B cell (primary cell): ENCODE measurements at regions of chr15 and their contacts with region 1.

Region 1: DNA sequence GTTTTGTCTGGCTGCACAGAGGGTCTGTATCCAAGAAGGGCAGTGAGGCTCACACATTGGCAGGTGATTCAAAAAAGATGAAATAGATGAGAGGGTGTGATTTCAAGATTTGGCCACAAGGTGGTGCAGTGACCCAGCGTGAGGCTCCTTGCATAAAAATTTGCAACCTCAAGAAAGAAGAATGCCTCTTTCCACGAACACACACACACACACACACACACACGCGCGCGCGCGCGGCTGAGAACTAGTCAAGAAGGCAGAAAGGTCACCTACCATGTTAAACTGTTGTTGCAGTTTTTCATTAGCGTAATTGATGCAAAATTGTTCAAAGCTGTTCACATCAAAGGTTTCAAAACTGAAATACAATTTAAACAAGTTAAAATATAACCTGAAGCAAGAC is 39.2 kb downstream of the MYO5C start:
- DNase-seq: peak; percentile 89
- ATAC-seq: peak; percentile 87
- H3K4me3 ChIP-seq: no peak overlapping the region
- H3K4me3 Mint-ChIP-seq: peak overlapping the region; percentile 50
- H3K27ac ChIP-seq: no peak overlapping the region
- H3K27ac Mint-ChIP-seq: peak overlapping the region; percentile 85
- H3K4me1 ChIP-seq: peaks cover 18 to 33% of the 10 kb centered on the region in 2 donors
- H3K4me1 Mint-ChIP-seq: peaks cover 43% of the 10 kb centered on the region
- H3K27me3 ChIP-seq: no peaks in the 10 kb centered on the region
- H3K27me3 Mint-ChIP-seq: no peaks in the 10 kb centered on the region
- CTCF ChIP-seq: peak; percentile 79

Region 2: GRCh38 chr15:52217186-52217585 is 39.2 kb before region 1 on chr15:
- CTCF ChIA-PET with region 1: interaction called, 512 read pairs
- POLR2A ChIA-PET with region 1: interaction called, 3 read pairs
- intact Hi-C with region 1: no loop called
- DNase-seq: peak; percentile 52
- ATAC-seq: peak; percentile 58
- H3K4me3 ChIP-seq: no peak overlapping the region
- H3K4me3 Mint-ChIP-seq: no peak overlapping the region
- H3K27ac ChIP-seq: no peak overlapping the region
- H3K27ac Mint-ChIP-seq: peak overlapping the region; percentile 47
- H3K4me1 ChIP-seq: peaks cover 19 to 21% of the 10 kb centered on the region in 2 donors
- H3K4me1 Mint-ChIP-seq: peaks cover 32% of the 10 kb centered on the region
- H3K27me3 ChIP-seq: no peaks in the 10 kb centered on the region
- H3K27me3 Mint-ChIP-seq: no peaks in the 10 kb centered on the region
- CTCF ChIP-seq: peak; percentile 45

Region 3: GRCh38 chr15:52331490-52332240 is 75.3 kb after region 1 on chr15:
- CTCF ChIA-PET with region 1: interaction called, 44 read pairs
- POLR2A ChIA-PET with region 1: interaction called, 3 read pairs
- intact Hi-C with region 1: loop called (anchors 1 kb)
- DNase-seq: peak; percentile 67
- ATAC-seq: peak; percentile 90
- H3K4me3 ChIP-seq: no peak overlapping the region
- H3K4me3 Mint-ChIP-seq: no peak overlapping the region
- H3K27ac ChIP-seq: peak overlapping the region in 1 of 2 donors; percentile 20
- H3K27ac Mint-ChIP-seq: peak overlapping the region; percentile 74
- H3K4me1 ChIP-seq: peaks cover 7 to 8% of the 10 kb centered on the region in 2 donors
- H3K4me1 Mint-ChIP-seq: peaks cover 10% of the 10 kb centered on the region
- H3K27me3 ChIP-seq: no peaks in the 10 kb centered on the region
- H3K27me3 Mint-ChIP-seq: no peaks in the 10 kb centered on the region
- CTCF ChIP-seq: peak; percentile 66

Region 4: GRCh38 chr15:52466134-52466701 is 209.9 kb after region 1 on chr15:
- CTCF ChIA-PET with region 1: interaction called, 6 read pairs
- POLR2A ChIA-PET with region 1: no interaction called
- intact Hi-C with region 1: loop called (anchors 2 kb)
- DNase-seq: peak; percentile 94
- ATAC-seq: peak; percentile 99
- H3K4me3 ChIP-seq: no peak overlapping the region
- H3K4me3 Mint-ChIP-seq: peak overlapping the region; percentile 33
- H3K27ac ChIP-seq: peak overlapping the region; percentile 43 to 65
- H3K27ac Mint-ChIP-seq: peak overlapping the region; percentile 78
- H3K4me1 ChIP-seq: peaks cover 34 to 37% of the 10 kb centered on the region in 2 donors
- H3K4me1 Mint-ChIP-seq: peaks cover 49% of the 10 kb centered on the region
- H3K27me3 ChIP-seq: no peaks in the 10 kb centered on the region
- H3K27me3 Mint-ChIP-seq: no peaks in the 10 kb centered on the region
- CTCF ChIP-seq: peak; percentile 62

Region 5: GRCh38 chr15:52609593-52609992 is 353.2 kb after region 1 on chr15:
- CTCF ChIA-PET with region 1: no interaction called
- POLR2A ChIA-PET with region 1: no interaction called
- intact Hi-C with region 1: loop called (anchors 10 kb)
- DNase-seq: no peak
- ATAC-seq: no peak
- H3K4me3 ChIP-seq: no peak overlapping the region
- H3K4me3 Mint-ChIP-seq: no peak overlapping the region
- H3K27ac ChIP-seq: no peak overlapping the region
- H3K27ac Mint-ChIP-seq: no peak overlapping the region
- H3K4me1 ChIP-seq: peaks cover 4 to 5% of the 10 kb centered on the region in 2 donors
- H3K4me1 Mint-ChIP-seq: peaks cover 18% of the 10 kb centered on the region
- H3K27me3 ChIP-seq: no peaks in the 10 kb centered on the region
- H3K27me3 Mint-ChIP-seq: no peaks in the 10 kb centered on the region
- CTCF ChIP-seq: no peak